ENCODE measurements at regions of chr1 and their contacts with region 1.

Region 1: DNA sequence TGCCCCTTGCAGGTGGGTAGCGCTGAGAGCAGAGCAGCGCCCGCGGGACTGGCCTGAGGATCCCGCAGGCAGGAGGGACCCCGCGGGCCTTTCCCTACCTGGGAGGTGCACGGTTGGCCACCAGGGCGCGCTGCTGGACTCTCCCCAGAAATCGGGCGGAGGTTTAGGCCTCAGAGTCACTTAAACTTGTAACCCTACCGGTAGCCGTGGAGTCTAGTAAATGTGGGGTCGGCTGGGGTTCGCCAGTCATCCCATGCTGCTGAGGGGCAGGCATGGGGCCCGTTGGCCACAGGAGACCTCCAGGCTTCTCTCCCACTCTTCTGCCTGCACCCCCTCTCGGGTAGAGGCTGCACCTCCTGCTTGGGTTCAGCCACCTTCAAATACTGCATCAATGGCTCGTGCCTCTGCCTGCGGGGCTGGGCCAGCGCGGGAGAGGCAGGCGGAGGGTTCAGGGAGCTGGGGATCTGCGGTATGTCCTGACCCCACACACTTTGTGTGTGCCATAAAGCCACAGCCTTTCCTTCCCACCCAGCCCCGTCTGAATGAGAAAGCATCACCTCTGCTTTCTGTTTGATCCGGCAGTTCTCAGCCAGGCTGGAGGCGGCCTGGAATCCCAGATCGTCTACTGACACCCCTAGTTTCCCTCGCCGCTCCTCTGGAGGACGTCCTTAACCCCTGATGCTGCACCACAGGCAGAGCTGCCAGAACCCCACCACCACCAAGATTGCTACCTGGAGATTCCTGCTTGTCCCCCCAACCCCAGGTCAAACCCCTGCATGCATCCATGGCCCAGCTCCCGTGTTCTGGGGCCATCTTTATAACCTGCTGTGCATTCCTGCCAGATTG is 12.3 kb upstream of the GSTM4 start:
- DNase-seq: no peak
- H3K4me3 ChIP-seq: no peak overlapping the region
- H3K27ac ChIP-seq: no peak overlapping the region
- H3K27me3 ChIP-seq: no peaks in the 10 kb centered on the region
- CTCF ChIP-seq: peak; percentile 87

Region 2: DNA sequence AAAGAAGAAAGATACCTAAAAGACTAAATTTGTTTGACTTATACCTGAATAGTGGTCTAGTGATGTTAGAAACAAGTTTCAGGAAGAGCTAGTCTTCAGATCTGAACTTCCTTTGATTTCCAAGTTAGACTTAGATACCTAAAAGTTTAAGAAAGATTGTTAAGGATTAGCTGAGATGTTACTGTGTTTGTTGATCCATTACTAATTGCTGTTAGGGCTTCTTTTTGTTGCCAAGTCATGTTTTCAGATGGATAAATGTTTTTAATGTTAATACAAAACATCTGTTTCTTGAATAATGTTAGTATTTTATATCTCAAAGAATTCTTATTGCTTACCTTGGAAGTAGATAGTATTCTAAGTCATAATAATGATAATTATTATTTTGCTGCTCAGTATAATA is 83.6 kb before region 1 on chr1:
- CTCF ChIA-PET with region 1: interaction called, 14 read pairs
- POLR2A ChIA-PET with region 1: no interaction called
- DNase-seq: no peak
- H3K4me3 ChIP-seq: no peak overlapping the region
- H3K27ac ChIP-seq: no peak overlapping the region
- H3K27me3 ChIP-seq: no peaks in the 10 kb centered on the region
- CTCF ChIP-seq: no peak

Region 3: GRCh38 chr1:109613361-109614147 is 30.1 kb before region 1 on chr1:
- CTCF ChIA-PET with region 1: interaction called, 13 read pairs
- POLR2A ChIA-PET with region 1: interaction called, 3 read pairs
- DNase-seq: no peak
- H3K4me3 ChIP-seq: no peak overlapping the region
- H3K27ac ChIP-seq: peak overlapping the region; percentile 47
- H3K27me3 ChIP-seq: no peaks in the 10 kb centered on the region
- CTCF ChIP-seq: no peak

Region 4: GRCh38 chr1:109630081-109630897 is 13.3 kb before region 1 on chr1:
- CTCF ChIA-PET with region 1: interaction called, 64 read pairs
- POLR2A ChIA-PET with region 1: no interaction called
- DNase-seq: no peak
- H3K4me3 ChIP-seq: no peak overlapping the region
- H3K27ac ChIP-seq: no peak overlapping the region
- H3K27me3 ChIP-seq: no peaks in the 10 kb centered on the region
- CTCF ChIP-seq: peak; percentile 8; the same call in 1 of the 2 replicates

Region 5: DNA sequence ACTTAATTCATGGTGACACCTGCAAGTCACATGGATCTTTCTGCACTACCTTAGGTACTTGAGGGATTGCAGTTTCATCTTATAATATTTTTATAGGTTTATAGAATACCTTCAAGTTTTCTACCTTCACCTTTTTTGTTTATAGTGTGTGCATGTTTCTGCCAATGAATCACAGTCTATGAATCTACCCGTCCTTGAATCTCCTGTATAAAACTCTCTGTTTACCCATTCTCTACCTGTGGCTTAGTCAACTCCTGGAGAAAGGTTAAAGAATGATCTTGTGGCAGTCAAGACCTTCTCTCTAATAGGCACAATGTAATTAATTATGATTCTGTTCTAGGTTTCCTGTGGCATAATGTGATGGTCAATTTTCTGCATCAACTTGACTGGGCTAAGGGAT is 21.1 kb after region 1 on chr1:
- CTCF ChIA-PET with region 1: interaction called, 13 read pairs
- POLR2A ChIA-PET with region 1: no interaction called
- DNase-seq: no peak
- H3K4me3 ChIP-seq: no peak overlapping the region
- H3K27ac ChIP-seq: no peak overlapping the region
- H3K27me3 ChIP-seq: no peaks in the 10 kb centered on the region
- CTCF ChIP-seq: no peak

Region 6: GRCh38 chr1:109783429-109783831 is 139.8 kb after region 1 on chr1:
- CTCF ChIA-PET with region 1: interaction called, 365 read pairs
- POLR2A ChIA-PET with region 1: no interaction called
- DNase-seq: no peak
- H3K4me3 ChIP-seq: no peak overlapping the region
- H3K27ac ChIP-seq: peak overlapping the region; percentile 71
- H3K27me3 ChIP-seq: peaks cover 2% of the 10 kb centered on the region
- CTCF ChIP-seq: no peak

Measured in AG04450 (cell line).